Transverse colon (tissue), 4 donors: ENCODE measurements at regions of chr19 and their contacts with region 1.

Region 1: GRCh38 chr19:18478569-18479311 is 40.8 kb upstream of the ISYNA1 start:
- DNase-seq: peak; percentile 76
- H3K4me3 ChIP-seq: no peak overlapping the region
- H3K27ac ChIP-seq: peak overlapping the region; percentile 80 to 88 (median 84)
- H3K4me1 ChIP-seq: peaks cover 44 to 80% (median 61%) of the 10 kb centered on the region in 4 donors
- H3K27me3 ChIP-seq: no peaks in the 10 kb centered on the region
- CTCF ChIP-seq: no peak
- EP300 ChIP-seq: peak; percentile 87
- POLR2A ChIP-seq: no peak

Region 2: GRCh38 chr19:18519962-18520847 is 41.5 kb after region 1 on chr19:
- in situ Hi-C with region 1: no loop called
- intact Hi-C with region 1: loop called (anchors 5 kb)
- DNase-seq: peak; percentile 83
- H3K4me3 ChIP-seq: peak overlapping the region; percentile 66 to 99 (median 89)
- H3K27ac ChIP-seq: peak overlapping the region; percentile 97 to 100 (median 98)
- H3K4me1 ChIP-seq: peaks cover 13 to 54% (median 31%) of the 10 kb centered on the region in 4 donors
- H3K27me3 ChIP-seq: no peaks in the 10 kb centered on the region
- CTCF ChIP-seq: peak; percentile 62 to 87 (median 65)
- EP300 ChIP-seq: no peak
- POLR2A ChIP-seq: peak; percentile 64

Region 3: DNA sequence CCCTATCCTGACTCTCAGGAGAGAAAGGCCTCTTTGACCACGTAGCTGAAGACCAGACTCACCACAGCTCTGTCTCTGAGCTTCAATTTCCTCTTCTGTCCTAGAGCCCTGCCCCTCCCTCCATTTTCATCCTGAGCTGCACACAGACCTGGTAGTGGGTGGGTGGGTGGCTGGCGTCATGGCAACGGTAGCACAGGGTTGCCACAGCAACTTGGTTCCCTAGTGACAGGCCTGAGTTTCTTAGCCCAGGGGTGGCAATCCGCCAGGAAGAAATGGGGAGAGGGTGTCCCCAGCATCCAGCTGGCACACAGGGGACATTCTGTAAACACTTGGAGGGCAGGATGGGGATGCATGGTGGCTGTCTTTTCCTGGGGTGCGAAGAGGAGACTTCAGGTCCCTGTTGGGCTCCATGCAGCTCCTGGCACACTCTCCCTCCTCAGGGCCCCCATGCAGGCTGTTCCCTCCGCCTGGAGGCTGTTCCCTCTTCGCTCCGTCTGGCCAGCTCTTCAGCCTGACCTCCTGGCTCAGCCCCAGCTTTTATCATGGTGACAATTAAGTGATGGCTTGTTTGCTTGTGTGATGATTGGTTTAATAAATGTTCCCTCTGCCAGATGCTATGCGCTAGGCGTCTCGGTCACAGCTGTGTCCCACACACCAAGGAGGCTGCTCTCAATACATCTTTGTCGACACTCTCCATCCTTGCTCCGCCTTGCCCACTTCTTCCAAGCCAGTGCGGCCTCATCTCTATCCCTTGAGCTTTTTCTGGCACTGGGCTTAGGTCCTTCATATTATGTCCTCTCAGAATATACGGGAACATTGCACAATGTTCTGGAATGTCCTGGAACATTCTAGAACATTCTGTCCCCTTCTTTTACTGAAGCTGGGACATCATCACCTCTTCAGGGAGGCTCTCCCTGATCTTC is 150.7 kb after region 1 on chr19:
- in situ Hi-C with region 1: no loop called
- intact Hi-C with region 1: no loop called
- DNase-seq: no peak
- H3K4me3 ChIP-seq: no peak overlapping the region
- H3K27ac ChIP-seq: peak overlapping the region in 2 of 4 donors; percentile 21 to 28
- H3K4me1 ChIP-seq: peaks cover 0 to under 1% (median 0%) of the 10 kb centered on the region in 4 donors
- H3K27me3 ChIP-seq: peaks cover 10% of the 10 kb centered on the region
- CTCF ChIP-seq: no peak
- EP300 ChIP-seq: peak; percentile 95
- POLR2A ChIP-seq: no peak

Region 4: GRCh38 chr19:18961767-18962620 is 483.3 kb after region 1 on chr19:
- in situ Hi-C with region 1: no loop called
- intact Hi-C with region 1: loop called (anchors 5 kb)
- DNase-seq: no peak
- H3K4me3 ChIP-seq: no peak overlapping the region
- H3K27ac ChIP-seq: no peak overlapping the region
- H3K4me1 ChIP-seq: peaks cover 0 to 3% (median 0%) of the 10 kb centered on the region in 4 donors
- H3K27me3 ChIP-seq: peaks cover 12% of the 10 kb centered on the region
- CTCF ChIP-seq: no peak
- EP300 ChIP-seq: no peak
- POLR2A ChIP-seq: no peak